Breast epithelium (tissue), 4 donors: ENCODE measurements at regions of chr18 and their contacts with region 1.

Region 1: DNA sequence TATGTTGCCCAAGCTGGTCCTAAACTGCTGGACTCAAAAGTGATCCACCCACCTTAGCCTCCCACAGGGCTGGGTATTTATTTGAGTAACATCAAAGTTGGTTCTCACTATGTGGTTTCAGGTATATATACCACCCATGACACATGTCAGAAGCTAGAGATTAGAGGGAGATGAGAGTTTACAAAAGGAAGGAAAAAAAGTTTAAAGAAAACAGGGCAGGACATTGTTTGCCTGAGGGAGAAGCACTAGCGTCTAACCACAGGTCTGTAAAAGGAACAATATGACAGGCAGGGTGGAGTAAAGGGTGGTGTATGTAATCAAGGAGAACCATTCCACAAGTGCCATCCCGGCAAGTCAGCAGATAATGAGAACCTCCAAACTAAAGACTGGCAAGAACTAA is 8.5 kb downstream of the CEP76 start:
- DNase-seq: no peak
- H3K4me3 ChIP-seq: no peak overlapping the region
- H3K27ac ChIP-seq: no peak overlapping the region
- H3K4me1 ChIP-seq: no peaks in the 10 kb centered on the region
- H3K27me3 ChIP-seq: no peaks in the 10 kb centered on the region
- CTCF ChIP-seq: no peak
- POLR2A ChIP-seq: no peak

Region 2: GRCh38 chr18:12507007-12507406 is 187.0 kb before region 1 on chr18:
- intact Hi-C with region 1: no loop called
- DNase-seq: no peak
- H3K4me3 ChIP-seq: no peak overlapping the region
- H3K27ac ChIP-seq: no peak overlapping the region
- H3K4me1 ChIP-seq: no peaks in the 10 kb centered on the region
- H3K27me3 ChIP-seq: no peaks in the 10 kb centered on the region
- CTCF ChIP-seq: no peak
- POLR2A ChIP-seq: no peak

Region 3: GRCh38 chr18:13416208-13416607 is 722.2 kb after region 1 on chr18:
- intact Hi-C with region 1: loop called (anchors 10 kb)
- DNase-seq: no peak
- H3K4me3 ChIP-seq: no peak overlapping the region
- H3K27ac ChIP-seq: peak overlapping the region in 1 of 2 donors; percentile 7
- H3K4me1 ChIP-seq: no peaks in the 10 kb centered on the region
- H3K27me3 ChIP-seq: no peaks in the 10 kb centered on the region
- CTCF ChIP-seq: no peak
- POLR2A ChIP-seq: no peak